Calu3 (cell line): ENCODE measurements at regions of chr9 and their contacts with region 1.

Region 1: DNA sequence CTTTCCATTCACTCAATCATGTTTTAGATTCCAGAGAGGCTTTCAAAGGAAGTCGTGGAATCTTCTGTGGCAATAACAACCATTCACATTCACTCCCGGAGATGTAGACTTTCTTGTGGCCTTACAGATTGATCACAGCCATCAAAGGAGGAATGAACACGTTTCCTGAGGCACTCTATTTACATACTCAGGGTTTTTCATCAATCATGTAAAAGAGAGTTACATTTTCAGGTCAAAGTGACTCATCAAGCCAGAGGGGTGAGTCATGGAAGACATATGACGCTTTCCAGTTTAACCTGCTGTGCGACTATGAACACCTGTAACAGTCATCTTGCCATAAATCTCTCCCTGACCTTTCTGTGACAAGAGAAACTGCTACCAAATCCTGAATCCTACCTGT is 39.3 kb upstream of the RAD23B start:
- DNase-seq: peak; percentile 69
- H3K4me3 Mint-ChIP-seq: peak overlapping the region; percentile 24
- H3K27ac Mint-ChIP-seq: peak overlapping the region; percentile 93
- H3K4me1 Mint-ChIP-seq: peaks cover 48% of the 10 kb centered on the region
- H3K27me3 Mint-ChIP-seq: no peaks in the 10 kb centered on the region
- CTCF ChIP-seq: no peak

Region 2: GRCh38 chr9:107323836-107324585 is 80.3 kb after region 1 on chr9:
- CTCF ChIA-PET with region 1: no interaction called
- intact Hi-C with region 1: no loop called
- DNase-seq: no peak
- H3K4me3 Mint-ChIP-seq: no peak overlapping the region
- H3K27ac Mint-ChIP-seq: no peak overlapping the region
- H3K4me1 Mint-ChIP-seq: no peaks in the 10 kb centered on the region
- H3K27me3 Mint-ChIP-seq: no peaks in the 10 kb centered on the region
- CTCF ChIP-seq: no peak

Region 3: DNA sequence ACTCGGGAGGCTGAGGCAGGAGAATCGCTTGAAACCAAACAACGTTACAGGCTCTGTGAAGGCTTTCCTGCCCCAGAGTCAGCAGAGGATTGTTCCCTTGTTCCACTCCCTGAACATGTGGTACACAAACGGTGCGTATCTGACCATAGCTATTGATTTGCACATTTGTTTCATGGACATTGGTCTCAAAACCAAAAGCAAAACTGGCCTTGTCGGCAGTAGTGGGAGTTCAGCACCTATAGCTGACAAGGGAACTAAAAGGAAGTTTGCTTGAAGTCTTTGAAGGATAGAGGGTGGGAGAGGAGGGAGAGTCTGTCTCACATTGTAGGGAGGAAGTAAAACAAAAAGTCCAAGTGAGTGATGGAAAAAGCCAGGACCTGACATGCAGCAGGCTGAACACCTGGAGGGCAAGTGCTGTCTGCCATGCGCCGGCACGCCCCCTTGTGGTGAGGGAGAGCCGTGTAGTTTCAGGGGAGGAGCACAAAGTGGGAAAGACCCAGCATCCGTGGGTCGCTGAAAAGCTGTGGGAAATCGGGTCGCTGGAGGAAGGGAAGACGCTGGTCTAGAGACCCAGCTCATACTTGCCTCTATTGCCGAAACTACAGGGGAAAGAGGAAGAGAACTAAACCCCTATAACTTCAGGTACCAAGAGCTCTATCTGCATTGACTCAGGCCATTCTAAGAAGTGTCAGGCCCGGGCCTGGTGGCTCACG is 97.3 kb after region 1 on chr9:
- CTCF ChIA-PET with region 1: interaction called, 11 read pairs
- intact Hi-C with region 1: loop called (anchors 2 kb)
- DNase-seq: peak; percentile 87
- H3K4me3 Mint-ChIP-seq: peak overlapping the region; percentile 9
- H3K27ac Mint-ChIP-seq: peak overlapping the region; percentile 81
- H3K4me1 Mint-ChIP-seq: peaks cover 19% of the 10 kb centered on the region
- H3K27me3 Mint-ChIP-seq: no peaks in the 10 kb centered on the region
- CTCF ChIP-seq: peak; percentile 75